Posterior cingulate gyrus (tissue), 11 donors: ENCODE measurements at regions of chr1 and their contacts with region 1.

Region 1: DNA sequence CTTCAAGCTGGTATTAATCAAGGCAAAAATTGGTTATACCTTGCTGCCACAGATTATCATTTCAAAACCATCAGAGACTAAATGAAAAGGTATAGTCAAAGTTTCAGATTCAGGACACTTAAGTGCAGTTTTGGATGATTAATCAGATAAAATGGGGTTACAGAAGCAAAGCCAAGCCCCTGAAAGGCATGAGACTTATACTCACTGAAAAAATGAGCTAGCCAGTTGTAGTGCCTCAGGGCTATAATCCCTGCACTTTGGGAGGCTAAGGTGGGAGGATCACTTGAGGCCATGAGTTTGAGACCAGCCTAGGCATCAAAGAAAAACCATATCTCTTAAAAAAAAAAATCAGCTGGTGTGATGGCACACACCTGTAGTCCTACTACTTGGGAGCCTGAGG is 15.2 kb downstream of the LRRC40 start:
- DNase-seq: no peak

Region 2: GRCh38 chr1:69585666-69586065 is 604.5 kb before region 1 on chr1:
- intact Hi-C with region 1: loop called (anchors 5 kb)
- DNase-seq: no peak

Region 3: GRCh38 chr1:70221241-70222121 is 31.3 kb after region 1 on chr1 and contains the start of gene SRSF11:
- intact Hi-C with region 1: no loop called
- DNase-seq: peak; percentile 93 to 99 (median 96)